Endothelial cell of umbilical vein (primary cell): ENCODE measurements at regions of chr1 and their contacts with region 1.

Region 1: DNA sequence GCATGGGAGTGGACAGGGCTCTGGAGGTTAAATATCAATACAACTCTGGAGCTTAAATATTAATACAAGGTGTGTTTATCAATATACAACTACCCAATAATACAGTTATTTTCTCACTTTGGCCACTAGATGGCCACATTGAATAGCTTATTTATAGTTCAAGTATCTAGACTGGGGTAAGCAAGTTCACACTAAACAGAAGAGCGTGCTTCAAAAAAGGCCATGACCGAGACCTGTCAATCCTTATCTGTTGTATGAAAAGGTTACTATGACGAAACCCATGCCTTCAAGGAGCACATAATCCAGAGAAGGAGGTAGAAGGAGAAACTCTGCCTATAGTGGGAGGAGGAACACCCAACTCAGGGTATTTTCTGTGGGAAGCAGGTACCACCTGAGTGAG is 29.1 kb downstream of the CHML start:
- DNase-seq: peak; percentile 74
- H3K4me3 ChIP-seq: no peak overlapping the region
- H3K27ac ChIP-seq: no peak overlapping the region
- H3K4me1 ChIP-seq: peaks cover 44% of the 10 kb centered on the region
- H3K27me3 ChIP-seq: no peaks in the 10 kb centered on the region
- CTCF ChIP-seq: peak; percentile 38 to 47
- POLR2A ChIP-seq: no peak

Region 2: DNA sequence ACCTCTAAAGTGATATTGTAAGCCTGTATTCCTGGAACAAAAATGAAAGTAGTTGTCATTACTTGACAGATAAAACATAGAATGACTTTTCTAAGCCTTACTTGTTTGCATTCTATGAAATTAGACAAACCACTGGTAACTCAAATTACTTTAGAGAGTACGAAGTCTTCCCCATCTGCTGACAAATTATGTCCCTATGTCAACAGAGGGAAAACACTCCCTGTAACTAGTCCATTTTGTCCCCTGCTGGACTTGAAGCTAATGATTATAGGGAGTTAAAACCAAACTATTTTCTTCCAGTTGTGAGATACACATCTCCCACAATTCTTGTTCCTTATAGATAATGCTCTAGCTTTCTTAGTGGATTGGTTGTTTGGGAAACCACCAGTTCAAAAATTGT is 1038.7 kb before region 1 on chr1:
- CTCF ChIA-PET with region 1: no interaction called
- POLR2A ChIA-PET with region 1: no interaction called
- dilution Hi-C with region 1: no loop called
- intact Hi-C with region 1: no loop called
- DNase-seq: no peak
- H3K4me3 ChIP-seq: no peak overlapping the region
- H3K27ac ChIP-seq: no peak overlapping the region
- H3K4me1 ChIP-seq: no peaks in the 10 kb centered on the region
- H3K27me3 ChIP-seq: no peaks in the 10 kb centered on the region
- CTCF ChIP-seq: no peak
- POLR2A ChIP-seq: no peak

Region 3: DNA sequence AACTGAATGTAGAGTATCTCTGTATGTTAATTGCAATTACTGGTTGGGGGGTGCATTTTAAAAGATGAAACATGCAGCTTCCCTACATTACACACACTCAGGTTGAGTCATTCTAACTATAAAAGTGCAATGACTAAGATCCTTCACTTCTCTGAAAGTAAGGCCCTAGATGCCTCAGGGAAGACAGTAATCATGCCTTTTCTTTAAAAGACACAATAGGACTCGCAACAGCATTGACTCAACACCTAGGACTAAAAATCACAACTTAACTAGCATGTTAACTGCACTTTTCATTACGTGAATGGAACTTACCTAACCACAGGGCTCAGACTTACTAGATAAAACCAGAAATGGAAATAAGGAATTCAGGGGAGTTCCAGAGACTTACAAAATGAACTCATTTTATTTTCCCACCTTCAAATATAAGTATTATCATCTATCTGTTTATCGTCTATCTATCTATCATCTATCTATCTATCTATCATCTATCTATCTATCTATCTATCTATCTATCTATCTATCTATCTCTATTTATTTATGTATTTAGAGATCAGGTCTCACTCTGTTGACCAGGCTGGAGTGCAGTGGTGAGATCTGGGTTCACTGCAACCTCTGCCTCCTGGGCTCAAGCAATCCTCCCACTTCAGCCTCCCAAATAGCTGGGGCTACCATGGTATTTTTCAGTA is 18.6 kb before region 1 on chr1:
- CTCF ChIA-PET with region 1: interaction called, 21 read pairs
- POLR2A ChIA-PET with region 1: no interaction called
- dilution Hi-C with region 1: no loop called
- intact Hi-C with region 1: no loop called
- DNase-seq: no peak
- H3K4me3 ChIP-seq: no peak overlapping the region
- H3K27ac ChIP-seq: no peak overlapping the region
- H3K4me1 ChIP-seq: no peaks in the 10 kb centered on the region
- H3K27me3 ChIP-seq: no peaks in the 10 kb centered on the region
- CTCF ChIP-seq: no peak
- POLR2A ChIP-seq: no peak

Region 4: GRCh38 chr1:241640029-241640818 is 29.2 kb after region 1 on chr1 and contains the starts of genes CHML and OPN3:
- CTCF ChIA-PET with region 1: interaction called, 20 read pairs
- POLR2A ChIA-PET with region 1: no interaction called
- dilution Hi-C with region 1: no loop called
- intact Hi-C with region 1: loop called (anchors 1 kb)
- DNase-seq: peak; percentile 91
- H3K4me3 ChIP-seq: peak within 1 kb of the TSS; percentile 49 to 90 (median 57)
- H3K27ac ChIP-seq: peak within 1 kb of the TSS; percentile 39
- H3K4me1 ChIP-seq: peaks cover 33% of the 10 kb centered on the region
- H3K27me3 ChIP-seq: no peaks in the 10 kb centered on the region
- CTCF ChIP-seq: peak in 1 of 2 donors; percentile 19
- POLR2A ChIP-seq: peak; percentile 95
- total RNA-seq, gene CHML: 22.3 and 23.6 TPM in 2 replicates
- total RNA-seq, gene OPN3: 22.0 and 23.9 TPM in 2 replicates

Region 5: DNA sequence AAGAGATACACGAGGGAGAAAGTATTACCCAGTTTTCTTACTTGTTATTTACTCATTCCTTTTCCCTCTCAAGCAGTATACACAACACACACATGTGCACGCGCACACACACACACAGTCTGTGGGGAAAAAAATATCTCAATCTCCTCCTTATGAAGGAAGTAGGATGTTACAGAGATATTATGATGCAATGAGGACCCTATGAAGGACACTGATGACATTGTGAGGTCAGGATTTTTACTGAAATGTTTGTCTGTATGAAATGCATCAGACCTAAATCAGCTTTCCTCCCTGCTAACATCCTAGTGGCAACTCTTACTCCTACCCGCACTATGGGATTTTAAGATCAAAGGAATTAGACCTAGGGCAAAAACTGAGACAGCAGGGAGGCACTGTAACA is 40.9 kb after region 1 on chr1 and contains the start of gene WDR64:
- CTCF ChIA-PET with region 1: no interaction called
- POLR2A ChIA-PET with region 1: no interaction called
- dilution Hi-C with region 1: no loop called
- intact Hi-C with region 1: no loop called
- DNase-seq: no peak
- H3K4me3 ChIP-seq: no peak within 1 kb of the TSS
- H3K27ac ChIP-seq: no peak within 1 kb of the TSS
- H3K4me1 ChIP-seq: no peaks in the 10 kb centered on the region
- H3K27me3 ChIP-seq: no peaks in the 10 kb centered on the region
- CTCF ChIP-seq: no peak
- POLR2A ChIP-seq: no peak
- total RNA-seq, gene WDR64: not detected in 2 replicates

Region 6: DNA sequence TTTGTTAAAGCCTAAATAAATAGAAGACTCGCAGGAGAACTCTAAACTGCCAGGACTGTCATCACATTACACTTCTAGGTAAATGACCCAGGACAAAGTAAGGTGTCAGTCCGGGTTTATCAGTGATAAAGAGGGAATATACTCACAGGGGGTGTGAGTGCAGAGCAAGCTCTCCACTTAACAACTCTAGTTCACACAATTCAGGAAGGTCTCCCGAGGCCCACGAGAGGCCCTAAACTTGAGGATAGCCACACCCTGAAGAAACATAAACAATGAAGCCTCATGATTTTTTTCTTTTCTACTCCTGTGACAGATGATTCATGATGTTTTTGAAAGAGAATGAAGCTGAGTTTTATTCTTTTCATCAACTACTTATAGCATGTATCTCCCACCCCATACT is 171.3 kb after region 1 on chr1:
- CTCF ChIA-PET with region 1: no interaction called
- POLR2A ChIA-PET with region 1: no interaction called
- dilution Hi-C with region 1: no loop called
- intact Hi-C with region 1: no loop called
- DNase-seq: no peak
- H3K4me3 ChIP-seq: no peak overlapping the region
- H3K27ac ChIP-seq: no peak overlapping the region
- H3K4me1 ChIP-seq: no peaks in the 10 kb centered on the region
- H3K27me3 ChIP-seq: no peaks in the 10 kb centered on the region
- CTCF ChIP-seq: no peak
- POLR2A ChIP-seq: no peak

Region 7: DNA sequence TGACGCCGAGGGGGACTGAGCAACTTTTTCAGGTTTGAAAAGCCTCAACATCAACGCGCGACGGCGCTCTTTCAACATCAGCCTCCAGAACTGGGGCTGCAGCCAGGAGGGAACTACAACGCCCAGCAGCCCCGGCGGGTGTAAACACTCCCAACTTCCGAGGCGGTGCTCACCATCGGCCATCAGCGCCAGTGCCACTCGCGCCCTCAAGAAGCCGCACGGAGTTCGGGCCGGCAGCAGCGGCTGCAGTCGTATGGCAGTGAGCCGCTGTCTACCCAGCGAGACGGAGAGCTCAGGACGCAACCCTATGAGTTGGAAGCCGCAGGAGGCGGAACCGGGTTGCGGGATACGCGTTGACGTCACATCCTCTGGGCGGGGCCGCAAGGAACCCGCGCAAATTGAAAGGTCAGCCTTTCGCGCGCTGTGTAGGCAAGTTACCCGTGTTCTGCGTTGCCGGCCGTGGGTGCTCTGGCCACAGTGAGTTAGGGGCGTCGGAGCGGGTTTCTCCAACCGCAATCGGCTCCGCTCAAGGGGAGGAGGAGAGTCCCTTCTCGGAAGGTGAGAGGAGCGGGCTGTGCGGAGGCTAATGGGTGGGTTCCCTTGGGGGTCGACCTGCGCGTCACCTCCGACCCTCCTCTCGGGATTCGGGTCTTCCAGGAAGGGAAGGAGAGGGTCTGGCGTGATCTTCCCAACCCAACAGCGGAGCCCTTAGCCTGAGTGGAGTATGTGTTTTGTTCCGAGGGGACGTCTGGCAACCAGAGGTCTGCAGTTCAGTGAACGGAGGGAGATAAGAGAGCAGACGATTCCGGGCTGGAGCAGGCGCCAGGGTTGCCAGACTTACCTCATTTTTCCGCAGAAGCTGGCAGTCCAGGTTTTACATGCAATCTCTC is 237.0 kb after region 1 on chr1 and contains the start of gene EXO1:
- CTCF ChIA-PET with region 1: interaction called, 11 read pairs
- POLR2A ChIA-PET with region 1: no interaction called
- dilution Hi-C with region 1: no loop called
- intact Hi-C with region 1: loop called (anchors 1 kb)
- DNase-seq: peak; percentile 94
- H3K4me3 ChIP-seq: peak within 1 kb of the TSS; percentile 33 to 69 (median 61)
- H3K27ac ChIP-seq: peak within 1 kb of the TSS; percentile 85
- H3K4me1 ChIP-seq: peaks cover 12% of the 10 kb centered on the region
- H3K27me3 ChIP-seq: peaks cover 3 to 7% of the 10 kb centered on the region in 2 experiments
- CTCF ChIP-seq: peak; percentile 32 to 37
- POLR2A ChIP-seq: peak; percentile 58
- total RNA-seq, gene EXO1: 19.8 and 23.5 TPM in 2 replicates

Region 8: GRCh38 chr1:241985787-241986186 is 374.7 kb after region 1 on chr1:
- CTCF ChIA-PET with region 1: interaction called, 24 read pairs
- POLR2A ChIA-PET with region 1: no interaction called
- dilution Hi-C with region 1: no loop called
- intact Hi-C with region 1: loop called (anchors 1 kb)
- DNase-seq: peak; percentile 31
- H3K4me3 ChIP-seq: no peak overlapping the region
- H3K27ac ChIP-seq: no peak overlapping the region
- H3K4me1 ChIP-seq: no peaks in the 10 kb centered on the region
- H3K27me3 ChIP-seq: no peaks in the 10 kb centered on the region
- CTCF ChIP-seq: peak; percentile 25 to 37
- POLR2A ChIP-seq: no peak

Region 9: DNA sequence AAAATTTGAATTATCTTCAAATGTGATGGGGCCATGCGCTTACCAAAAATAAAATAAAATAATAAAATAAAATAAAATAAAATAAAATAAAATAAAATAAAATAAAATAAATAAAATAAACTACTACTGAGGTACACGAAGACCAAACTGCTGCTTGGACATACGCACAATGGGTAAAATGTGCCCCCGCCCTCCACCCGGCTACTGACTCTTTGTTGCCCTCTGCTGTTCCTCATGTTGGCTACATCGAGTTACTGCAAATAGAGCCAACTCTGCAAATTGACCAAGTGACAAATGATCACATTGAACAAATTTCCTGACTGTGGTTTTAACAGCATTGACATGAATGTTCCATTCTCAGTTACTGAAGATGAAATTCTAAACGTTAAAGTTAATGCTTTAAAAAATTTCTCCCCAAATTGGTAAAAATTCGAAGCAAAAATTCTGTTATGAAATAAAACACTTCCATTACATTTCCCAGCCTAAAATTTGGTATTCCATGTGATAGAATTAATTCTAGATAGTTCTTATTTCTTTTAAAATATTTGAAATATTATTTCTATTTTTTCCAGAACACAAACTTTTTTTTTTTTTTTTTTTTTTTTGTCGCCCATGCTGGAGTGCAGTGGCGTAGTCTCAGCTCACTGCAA is 406.6 kb after region 1 on chr1:
- CTCF ChIA-PET with region 1: no interaction called
- POLR2A ChIA-PET with region 1: no interaction called
- dilution Hi-C with region 1: no loop called
- intact Hi-C with region 1: loop called (anchors 1 kb)
- DNase-seq: peak; percentile 56
- H3K4me3 ChIP-seq: no peak overlapping the region
- H3K27ac ChIP-seq: no peak overlapping the region
- H3K4me1 ChIP-seq: no peaks in the 10 kb centered on the region
- H3K27me3 ChIP-seq: no peaks in the 10 kb centered on the region
- CTCF ChIP-seq: peak; percentile 58 to 66
- POLR2A ChIP-seq: no peak